AG04449 (cell line): ENCODE measurements at regions of chr9 and their contacts with region 1.

Region 1: GRCh38 chr9:77149879-77150278 is 27.5 kb upstream of the VPS13A start:
- DNase-seq: no peak
- H3K4me3 ChIP-seq: no peak overlapping the region
- CTCF ChIP-seq: no peak

Region 2: GRCh38 chr9:76756268-76756640 is 393.6 kb before region 1 on chr9:
- CTCF ChIA-PET with region 1: interaction called, 21 read pairs
- POLR2A ChIA-PET with region 1: no interaction called
- DNase-seq: no peak
- H3K4me3 ChIP-seq: no peak overlapping the region
- CTCF ChIP-seq: peak; percentile 22

Region 3: DNA sequence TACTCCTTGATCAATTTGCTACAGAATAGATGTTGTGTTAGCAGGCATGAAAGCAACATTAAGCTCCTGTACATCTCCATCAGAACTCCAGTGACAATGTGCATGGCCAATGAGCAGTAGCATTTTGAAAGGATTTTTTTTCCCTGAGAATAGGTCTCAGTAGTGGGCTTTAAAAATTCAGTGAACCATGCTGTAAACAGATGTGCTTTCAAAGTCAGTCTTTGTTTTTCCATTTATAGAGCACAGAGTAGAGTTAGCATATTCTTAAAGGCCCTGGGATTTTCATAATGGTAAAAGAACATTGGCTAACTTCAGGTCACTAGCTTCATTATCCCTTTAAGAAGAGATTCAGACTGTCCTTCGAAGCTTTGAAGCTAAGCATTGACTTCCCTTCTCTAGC is 178.2 kb after region 1 on chr9:
- CTCF ChIA-PET with region 1: no interaction called
- POLR2A ChIA-PET with region 1: no interaction called
- DNase-seq: no peak
- H3K4me3 ChIP-seq: no peak overlapping the region
- CTCF ChIP-seq: no peak